ENCODE measurements at regions of chr1 and their contacts with region 1.

Region 1: DNA sequence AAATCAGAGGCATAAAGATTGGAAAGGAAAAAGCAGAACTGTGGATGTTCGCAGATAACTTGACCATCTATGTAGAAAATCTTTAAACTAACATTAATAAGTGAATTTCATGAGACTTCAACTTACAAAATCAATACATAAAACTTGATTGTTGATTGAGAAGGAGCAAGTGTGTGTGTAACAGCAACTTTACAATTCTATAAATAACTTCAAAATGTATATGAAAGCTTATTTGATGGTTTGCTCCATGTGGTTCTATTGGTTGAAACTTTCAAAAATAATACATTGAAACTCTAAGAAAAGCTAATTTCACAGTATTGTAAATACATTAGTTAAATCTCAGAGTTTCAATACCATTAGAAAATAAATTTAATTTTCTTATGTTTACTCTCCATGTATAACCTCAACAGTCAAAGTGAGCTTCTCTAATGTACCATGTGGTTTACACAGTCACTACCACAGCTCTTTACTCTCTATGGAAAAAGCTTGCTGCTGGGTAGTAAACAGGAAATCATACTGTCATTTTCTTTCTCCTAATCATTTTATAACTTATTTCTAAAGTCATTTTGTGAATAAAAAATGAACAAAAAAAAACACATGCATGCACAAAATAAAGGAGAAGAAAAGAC is 12.0 kb downstream of the AKT3 start:
- DNase-seq: peak; percentile 67
- H3K4me3 Mint-ChIP-seq: peak overlapping the region; percentile 32
- H3K27ac Mint-ChIP-seq: peak overlapping the region; percentile 83
- H3K4me1 Mint-ChIP-seq: peaks cover 22% of the 10 kb centered on the region
- H3K27me3 Mint-ChIP-seq: no peaks in the 10 kb centered on the region

Region 2: DNA sequence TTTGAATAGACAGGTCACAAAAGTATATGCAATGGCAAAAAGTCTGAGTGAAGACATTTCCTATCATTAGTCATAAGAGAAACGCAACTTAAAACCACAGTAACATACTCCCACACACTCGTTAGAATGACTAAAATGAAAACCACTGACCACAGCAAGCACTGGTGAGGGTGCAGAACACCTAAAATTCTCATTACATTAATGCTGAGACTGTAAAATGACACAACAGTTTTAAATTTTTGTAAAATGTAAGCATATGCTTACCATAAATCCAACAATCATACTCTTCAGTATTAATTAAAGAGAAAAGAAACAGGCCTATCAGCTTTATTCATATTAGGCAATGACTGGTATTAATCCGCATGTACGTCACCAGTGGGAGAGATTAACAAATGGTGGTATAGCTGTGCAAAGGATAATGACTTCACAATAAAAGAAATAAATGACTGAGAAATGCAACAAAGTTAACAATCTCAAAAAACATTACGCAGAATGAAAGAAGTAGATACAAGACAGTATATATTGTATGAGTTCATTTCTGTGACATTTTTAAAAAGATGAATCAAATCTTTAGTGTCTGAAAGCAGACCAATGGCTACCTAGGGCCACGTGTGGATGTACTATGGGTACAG is 241.5 kb before region 1 on chr1:
- intact Hi-C with region 1: loop called (anchors 2 kb)
- DNase-seq: peak; percentile 81
- H3K4me3 Mint-ChIP-seq: peak overlapping the region; percentile 43
- H3K27ac Mint-ChIP-seq: peak overlapping the region; percentile 87
- H3K4me1 Mint-ChIP-seq: peaks cover 24% of the 10 kb centered on the region
- H3K27me3 Mint-ChIP-seq: no peaks in the 10 kb centered on the region

Region 3: DNA sequence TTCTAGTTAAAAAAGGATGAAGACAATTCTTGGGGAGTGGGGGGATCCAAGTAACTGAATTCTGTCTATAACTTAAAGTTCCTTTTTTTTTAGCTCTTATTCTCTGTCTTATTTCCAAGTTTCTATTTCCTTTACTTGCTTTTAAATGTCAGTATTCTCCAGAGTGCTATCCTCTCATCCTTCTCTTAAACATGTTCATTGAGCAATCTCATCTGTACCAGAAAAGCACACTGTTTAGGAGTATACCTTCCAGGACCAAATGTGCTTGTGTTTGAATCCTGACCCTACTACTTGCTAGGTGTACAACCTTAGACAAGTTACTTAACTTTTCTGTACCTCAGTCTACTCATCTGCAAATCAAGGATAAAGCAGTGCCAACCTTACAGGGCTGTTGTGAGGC is 38.1 kb before region 1 on chr1:
- intact Hi-C with region 1: loop called (anchors 5 kb)
- DNase-seq: no peak
- H3K4me3 Mint-ChIP-seq: no peak overlapping the region
- H3K27ac Mint-ChIP-seq: no peak overlapping the region
- H3K4me1 Mint-ChIP-seq: peaks cover 15% of the 10 kb centered on the region
- H3K27me3 Mint-ChIP-seq: no peaks in the 10 kb centered on the region

Region 4: DNA sequence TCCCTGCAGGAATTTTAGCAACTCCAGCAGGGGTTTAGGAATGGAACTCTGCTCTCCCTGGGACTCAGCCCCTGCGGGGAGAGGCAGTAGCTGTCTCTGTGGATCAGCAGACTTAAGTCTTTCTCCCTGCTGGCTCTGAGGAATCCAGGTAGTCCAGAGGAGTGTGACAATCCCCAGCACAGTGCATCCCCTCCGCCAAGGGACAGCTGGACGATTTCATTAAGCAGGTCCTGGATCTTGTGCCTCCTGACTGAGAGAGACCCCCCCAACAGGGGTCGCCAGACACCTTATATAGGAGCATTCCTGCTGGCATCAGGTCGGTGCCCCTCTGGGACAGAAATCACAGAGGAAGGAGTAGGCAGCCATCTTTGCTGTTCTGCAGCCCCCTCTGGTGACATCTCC is 18.6 kb before region 1 on chr1:
- intact Hi-C with region 1: no loop called
- DNase-seq: no peak
- H3K4me3 Mint-ChIP-seq: no peak overlapping the region
- H3K27ac Mint-ChIP-seq: no peak overlapping the region
- H3K4me1 Mint-ChIP-seq: peaks cover 9% of the 10 kb centered on the region
- H3K27me3 Mint-ChIP-seq: no peaks in the 10 kb centered on the region

Region 5: DNA sequence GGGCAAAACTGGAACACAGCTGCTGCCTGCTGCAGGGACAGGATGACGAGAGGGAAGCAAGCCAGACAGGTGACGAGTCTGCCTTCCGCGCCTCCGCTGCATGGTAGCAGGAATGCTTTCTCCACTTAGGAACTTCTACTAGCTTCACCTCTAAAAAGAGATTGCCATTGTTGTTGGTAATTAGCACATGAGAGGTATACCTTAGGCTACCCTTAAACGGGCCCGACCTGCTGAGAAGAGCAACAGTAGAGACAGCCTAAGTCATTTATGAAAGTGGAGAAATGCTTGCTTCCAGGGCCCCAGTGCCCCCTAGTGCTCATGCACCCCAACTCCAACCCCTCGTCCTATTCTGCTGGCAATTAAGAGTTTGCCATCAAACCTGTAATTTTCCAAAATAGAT is 108.9 kb after region 1 on chr1:
- intact Hi-C with region 1: no loop called
- DNase-seq: peak; percentile 65
- H3K4me3 Mint-ChIP-seq: no peak overlapping the region
- H3K27ac Mint-ChIP-seq: no peak overlapping the region
- H3K4me1 Mint-ChIP-seq: no peaks in the 10 kb centered on the region
- H3K27me3 Mint-ChIP-seq: no peaks in the 10 kb centered on the region